ENCODE measurements at regions of chr11 and their contacts with region 1.

Region 1: DNA sequence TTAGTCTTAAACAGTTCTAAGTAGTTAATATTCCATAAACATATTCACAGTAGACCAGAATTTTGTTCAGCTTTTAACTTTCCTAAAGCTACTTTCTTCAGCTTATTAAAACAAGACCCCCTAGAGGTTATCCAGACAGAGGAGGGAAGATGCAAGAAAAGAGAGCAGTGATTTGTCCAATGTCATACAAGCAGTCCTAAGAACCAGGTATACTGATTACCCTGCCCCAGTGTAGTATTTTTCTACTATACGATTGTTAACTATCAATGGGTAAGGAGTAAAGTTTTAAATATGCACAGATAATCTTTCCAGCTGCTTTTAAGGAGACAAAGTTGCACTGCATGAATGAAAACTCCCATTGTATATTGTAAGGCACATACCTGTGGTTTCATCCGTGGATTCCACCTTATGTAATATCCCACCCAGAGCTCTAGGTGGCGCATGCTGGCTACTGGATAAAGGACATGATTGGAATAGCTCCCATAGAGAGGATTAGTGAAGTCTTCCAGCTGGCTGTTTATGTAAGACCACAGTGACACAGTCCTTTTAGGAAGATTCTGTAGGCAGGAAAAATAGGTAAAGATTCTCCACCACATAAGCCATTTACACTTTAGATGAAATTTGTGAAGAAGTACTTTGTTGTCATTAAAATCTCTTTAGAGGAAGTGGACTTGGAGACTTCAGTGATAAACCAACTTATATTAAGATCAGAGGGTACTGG is 45.6 kb downstream of the CEP57 start:
- DNase-seq: peak; percentile 54
- H3K4me3 ChIP-seq: no peak overlapping the region
- H3K27me3 ChIP-seq: no peaks in the 10 kb centered on the region
- CTCF ChIP-seq: peak; percentile 86

Region 2: DNA sequence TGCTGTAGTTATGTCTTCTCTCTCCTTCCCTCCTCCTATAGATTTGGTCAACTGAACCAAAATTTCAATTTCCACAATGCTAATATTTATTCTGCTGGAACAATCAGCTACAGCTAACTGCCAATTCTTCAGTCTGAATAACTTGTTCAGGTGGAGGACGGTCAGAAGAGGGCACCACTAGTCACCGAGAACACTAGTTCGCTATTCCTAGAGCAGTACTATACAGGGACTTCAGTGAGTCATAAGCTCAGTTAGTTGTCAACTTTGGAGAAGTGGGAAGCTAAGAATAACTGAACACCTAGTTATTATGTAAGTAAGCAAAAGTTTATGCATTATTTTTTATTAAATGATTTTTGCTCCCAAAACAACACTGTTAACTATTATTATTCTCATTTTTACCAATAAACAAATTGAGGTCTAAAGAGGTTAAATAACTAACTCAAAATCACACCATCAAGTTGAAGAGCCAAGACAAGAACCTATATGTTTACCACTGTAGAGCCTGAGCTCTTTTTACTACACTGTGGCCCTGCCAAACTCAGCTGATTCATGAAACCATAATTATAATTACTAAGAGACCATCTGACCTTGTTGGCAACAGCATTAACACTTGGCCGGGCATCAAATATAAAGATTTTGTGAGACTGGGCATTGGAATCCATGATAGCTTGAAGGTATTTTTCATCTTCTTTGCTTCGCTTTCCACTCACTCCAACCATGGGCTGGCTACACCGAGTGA is 13.3 kb after region 1 on chr11:
- CTCF ChIA-PET with region 1: interaction called, 10 read pairs
- POLR2A ChIA-PET with region 1: no interaction called
- DNase-seq: peak; percentile 27
- H3K4me3 ChIP-seq: no peak overlapping the region
- H3K27me3 ChIP-seq: no peaks in the 10 kb centered on the region
- CTCF ChIP-seq: peak; percentile 57

Region 3: DNA sequence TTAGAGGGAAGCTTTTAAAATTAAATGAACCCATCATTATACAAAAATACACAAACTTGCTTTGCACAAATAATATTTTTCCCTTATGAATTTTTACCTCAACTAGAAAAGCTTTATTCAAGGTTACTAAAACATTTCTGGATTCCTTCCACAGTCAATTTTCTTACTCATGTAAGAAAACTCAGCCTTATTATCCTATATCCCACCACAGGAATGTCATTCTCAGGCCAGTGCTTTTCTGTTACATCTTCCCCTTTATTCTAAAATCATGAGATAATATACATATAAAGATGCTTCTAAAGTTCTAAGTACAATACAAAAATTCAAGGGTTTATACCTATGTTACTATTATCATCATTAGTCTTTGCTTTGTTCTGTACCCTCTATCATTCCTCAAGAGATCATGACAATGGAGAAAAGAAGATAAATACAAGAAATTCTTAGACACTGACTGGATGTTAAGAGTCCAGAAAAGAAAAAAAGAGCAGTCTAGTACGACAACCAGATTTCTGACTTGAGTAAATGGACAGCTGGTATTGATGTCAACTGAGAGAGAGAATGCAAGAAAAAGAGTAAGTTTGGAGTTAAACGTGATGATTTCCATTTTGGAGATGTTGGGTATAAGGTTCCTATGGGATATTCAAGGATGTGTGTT is 27.7 kb after region 1 on chr11:
- CTCF ChIA-PET with region 1: no interaction called
- POLR2A ChIA-PET with region 1: interaction called, 26 read pairs
- DNase-seq: peak; percentile 10
- H3K4me3 ChIP-seq: no peak overlapping the region
- H3K27me3 ChIP-seq: no peaks in the 10 kb centered on the region
- CTCF ChIP-seq: no peak

Measured in BJ (cell line).